ENCODE measurements at regions of chr4 and their contacts with region 1.

Region 1: DNA sequence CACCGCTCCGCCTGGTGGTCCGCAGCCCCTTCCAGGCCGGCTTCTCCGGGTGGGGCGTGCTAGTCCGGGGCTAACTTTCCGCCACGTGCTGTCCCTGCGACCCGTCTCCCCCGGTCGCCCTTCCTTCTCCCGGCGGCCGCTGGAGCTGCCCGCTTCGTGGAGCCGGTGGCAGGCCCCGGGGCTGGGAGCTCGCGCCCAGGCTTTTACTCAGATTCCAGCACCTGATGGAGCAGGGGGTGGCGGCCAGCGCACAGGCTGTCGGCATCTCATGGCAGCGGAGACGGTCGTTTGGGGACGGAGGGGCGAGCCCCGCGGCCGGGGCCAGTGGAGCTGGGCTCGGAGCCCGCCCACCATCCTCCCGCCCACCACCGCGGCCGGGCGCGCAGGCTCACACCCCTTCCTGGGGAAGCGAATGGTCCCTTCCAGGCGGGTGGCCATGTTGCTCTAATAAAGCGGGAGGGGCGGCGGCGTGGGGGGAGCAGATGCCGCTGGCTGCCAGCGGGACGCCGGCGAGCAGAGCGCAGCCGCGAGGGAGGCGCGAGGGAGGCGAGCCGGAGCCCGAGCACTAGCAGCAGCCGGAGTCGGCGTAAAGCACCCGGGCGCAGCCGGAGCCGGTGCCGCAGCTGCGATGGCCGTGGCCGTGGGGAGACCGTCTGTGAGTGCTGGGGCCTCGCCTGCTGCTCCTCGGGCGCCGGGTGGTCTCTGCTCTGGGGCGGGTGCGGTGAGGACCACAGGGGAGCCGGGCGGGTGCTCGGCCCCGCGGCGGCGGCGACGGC is at the start of gene SEPTIN11:
- DNase-seq: peak; percentile 86
- H3K4me3 ChIP-seq: peak within 1 kb of the TSS; percentile 90
- H3K27ac ChIP-seq: peak within 1 kb of the TSS; percentile 93
- H3K27me3 ChIP-seq: no peaks in the 10 kb centered on the region
- CTCF ChIP-seq: peak; percentile 21; the same call in 1 of the 2 replicates
- polyA plus RNA-seq, gene SEPTIN11: 598 and 728 TPM in 2 replicates

Region 2: GRCh38 chr4:76738086-76738931 is 211.2 kb before region 1 on chr4:
- CTCF ChIA-PET with region 1: no interaction called
- POLR2A ChIA-PET with region 1: interaction called, 11 read pairs
- DNase-seq: peak; percentile 87
- H3K4me3 ChIP-seq: peak overlapping the region; percentile 8; the same call in 1 of the 2 replicates
- H3K27ac ChIP-seq: peak overlapping the region; percentile 94
- H3K27me3 ChIP-seq: no peaks in the 10 kb centered on the region
- CTCF ChIP-seq: no peak

Region 3: GRCh38 chr4:76752861-76753501 is 196.5 kb before region 1 on chr4:
- CTCF ChIA-PET with region 1: no interaction called
- POLR2A ChIA-PET with region 1: interaction called, 25 read pairs
- DNase-seq: peak; percentile 99
- H3K4me3 ChIP-seq: peak overlapping the region; percentile 36
- H3K27ac ChIP-seq: peak overlapping the region; percentile 99
- H3K27me3 ChIP-seq: no peaks in the 10 kb centered on the region
- CTCF ChIP-seq: no peak

Region 4: GRCh38 chr4:76781698-76782595 is 167.5 kb before region 1 on chr4:
- CTCF ChIA-PET with region 1: no interaction called
- POLR2A ChIA-PET with region 1: interaction called, 12 read pairs
- DNase-seq: peak; percentile 91
- H3K4me3 ChIP-seq: no peak overlapping the region; the same call in 1 of the 2 replicates
- H3K27ac ChIP-seq: peak overlapping the region; percentile 82
- H3K27me3 ChIP-seq: no peaks in the 10 kb centered on the region
- CTCF ChIP-seq: no peak

Region 5: GRCh38 chr4:76858319-76858718 is 91.1 kb before region 1 on chr4:
- CTCF ChIA-PET with region 1: no interaction called
- POLR2A ChIA-PET with region 1: no interaction called
- DNase-seq: no peak
- H3K4me3 ChIP-seq: no peak overlapping the region
- H3K27ac ChIP-seq: no peak overlapping the region
- H3K27me3 ChIP-seq: peaks cover 8% of the 10 kb centered on the region
- CTCF ChIP-seq: no peak

Region 6: GRCh38 chr4:76987153-76987587 is 37.7 kb after region 1 on chr4:
- CTCF ChIA-PET with region 1: no interaction called
- POLR2A ChIA-PET with region 1: interaction called, 25 read pairs
- DNase-seq: peak; percentile 96
- H3K4me3 ChIP-seq: peak overlapping the region; percentile 14; the same call in 1 of the 2 replicates
- H3K27ac ChIP-seq: peak overlapping the region; percentile 96
- H3K27me3 ChIP-seq: no peaks in the 10 kb centered on the region
- CTCF ChIP-seq: peak; percentile 14; the same call in 1 of the 2 replicates

Region 7: GRCh38 chr4:77036206-77036605 is 86.7 kb after region 1 on chr4:
- CTCF ChIA-PET with region 1: no interaction called
- POLR2A ChIA-PET with region 1: interaction called, 10 read pairs
- DNase-seq: peak; percentile 78
- H3K4me3 ChIP-seq: no peak overlapping the region
- H3K27ac ChIP-seq: no peak overlapping the region
- H3K27me3 ChIP-seq: no peaks in the 10 kb centered on the region
- CTCF ChIP-seq: no peak

Region 8: DNA sequence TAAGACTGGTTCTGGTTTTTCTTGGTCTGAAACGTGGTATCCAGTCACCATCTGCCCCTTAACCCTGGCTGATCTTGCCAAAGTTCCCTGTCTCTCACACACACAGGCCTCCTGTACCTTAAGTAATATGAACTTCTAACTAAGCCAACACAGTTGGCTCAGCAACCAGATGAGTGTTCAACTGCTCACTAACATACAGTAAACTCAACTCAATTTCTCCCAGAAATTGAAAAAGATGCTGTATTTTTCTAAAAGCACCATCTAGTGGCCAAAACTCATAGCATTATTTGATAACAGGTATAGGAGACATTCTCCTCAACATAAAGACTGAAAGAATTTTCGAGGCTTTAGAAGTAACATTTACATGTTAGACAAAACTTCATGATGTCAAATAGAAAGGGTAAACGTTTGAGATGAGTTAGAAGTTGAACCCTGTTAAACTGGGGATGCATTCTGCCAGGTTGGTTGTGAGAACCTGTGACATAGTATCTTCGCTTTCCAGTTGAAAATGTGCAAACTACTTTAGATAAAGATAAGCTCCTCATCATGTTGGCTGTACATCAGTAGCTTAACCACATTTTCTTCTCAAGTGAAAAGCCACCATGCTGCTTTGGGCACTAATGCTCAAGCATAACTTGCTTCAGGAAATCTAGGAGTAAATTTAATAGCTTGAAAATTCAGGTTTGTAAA is 95.1 kb after region 1 on chr4:
- CTCF ChIA-PET with region 1: interaction called, 19 read pairs
- POLR2A ChIA-PET with region 1: interaction called, 7 read pairs
- DNase-seq: no peak
- H3K4me3 ChIP-seq: no peak overlapping the region
- H3K27ac ChIP-seq: no peak overlapping the region
- H3K27me3 ChIP-seq: no peaks in the 10 kb centered on the region
- CTCF ChIP-seq: peak; percentile 69

Region 9: DNA sequence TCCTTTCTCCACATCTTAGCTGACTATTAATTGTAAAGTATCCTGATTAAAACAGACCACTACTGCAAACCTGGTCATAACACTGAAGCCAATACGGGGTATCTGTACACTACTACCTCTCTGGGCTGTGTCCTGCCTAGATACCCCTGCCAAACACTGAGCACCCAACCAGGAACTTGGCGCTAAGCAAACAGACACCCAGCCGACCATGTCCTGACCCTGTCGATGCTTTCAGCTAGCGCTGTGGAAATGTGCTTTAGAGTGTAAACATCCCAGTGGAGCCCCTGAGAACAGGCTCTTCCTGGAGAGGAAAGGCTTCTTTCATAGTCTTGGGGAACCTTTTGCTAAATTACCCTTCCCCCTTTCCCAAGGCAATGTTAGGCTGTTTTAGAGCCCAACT is 260.5 kb after region 1 on chr4:
- CTCF ChIA-PET with region 1: no interaction called
- POLR2A ChIA-PET with region 1: no interaction called
- DNase-seq: no peak
- H3K4me3 ChIP-seq: no peak overlapping the region
- H3K27ac ChIP-seq: no peak overlapping the region
- H3K27me3 ChIP-seq: peaks cover 33% of the 10 kb centered on the region
- CTCF ChIP-seq: no peak

Measured in AG04450 (cell line).